T-cell (primary cell): ENCODE measurements at regions of chr14 and their contacts with region 1.

Region 1: DNA sequence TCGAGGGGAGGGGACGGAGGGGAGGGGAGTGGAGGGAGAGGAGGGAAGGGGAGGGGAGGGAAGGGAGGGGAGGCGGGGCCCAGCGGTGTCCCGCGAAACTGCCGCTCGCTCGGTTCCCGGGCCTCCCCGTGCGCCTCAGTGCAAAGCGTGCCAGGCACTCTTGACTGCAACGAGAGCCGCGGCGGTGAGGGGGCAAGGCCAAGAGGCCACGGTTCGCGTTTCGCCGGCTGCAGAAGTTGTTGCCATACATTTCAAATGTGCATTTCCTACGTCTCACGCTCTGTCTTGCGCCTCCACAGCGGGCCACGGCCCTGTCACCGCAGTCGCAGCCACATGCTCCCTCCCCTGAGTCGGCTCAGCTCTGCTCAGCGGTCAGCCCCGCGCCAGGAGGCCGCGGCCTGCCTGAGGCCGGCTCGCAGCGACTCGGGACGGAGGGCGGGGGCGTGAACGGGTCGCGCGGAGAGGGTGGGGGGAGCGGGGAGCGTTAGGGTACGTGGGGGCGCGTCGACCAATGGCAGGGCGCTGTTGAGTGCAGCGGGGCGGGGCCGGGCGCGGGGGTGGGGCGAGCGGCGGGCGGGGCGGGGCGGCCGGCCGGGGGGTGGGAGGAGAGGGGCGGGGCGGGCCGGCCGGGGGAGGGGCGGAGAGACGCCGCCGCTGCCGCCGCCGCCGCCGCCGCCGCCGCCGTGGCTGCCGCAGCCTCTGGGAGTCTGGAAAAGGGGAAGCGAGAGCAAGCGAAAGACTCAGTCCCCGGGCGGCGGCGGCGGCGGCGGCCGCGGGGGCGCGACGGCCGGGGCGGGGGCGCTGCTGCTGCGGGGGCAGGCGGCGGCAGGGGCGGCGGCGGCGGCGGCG is at the start of gene PPP2R5C:
- DNase-seq: peak; percentile 77 to 92 (median 84)
- ATAC-seq: peak; percentile 71 to 75 (median 74)
- H3K4me3 ChIP-seq: peak within 1 kb of the TSS; percentile 78 to 96
- H3K4me3 Mint-ChIP-seq: peak within 1 kb of the TSS; percentile 88 to 91 (median 89)
- H3K27ac ChIP-seq: peak within 1 kb of the TSS; percentile 91
- H3K27ac Mint-ChIP-seq: peak within 1 kb of the TSS; percentile 80 to 83
- H3K4me1 ChIP-seq: peaks cover 2 to 26% of the 10 kb centered on the region in 2 experiments
- H3K4me1 Mint-ChIP-seq: peaks cover 32 to 47% (median 40%) of the 10 kb centered on the region in 3 donors
- H3K27me3 ChIP-seq: no peaks in the 10 kb centered on the region
- H3K27me3 Mint-ChIP-seq: no peaks in the 10 kb centered on the region
- total RNA-seq, gene PPP2R5C: 435 to 627 (median 489) TPM

Region 2: GRCh38 chr14:101707068-101707842 is 54.0 kb before region 1 on chr14:
- CTCF ChIA-PET with region 1: interaction called in 1 of 2 experiments, 37 read pairs
- POLR2A ChIA-PET with region 1: interaction called in 1 of 2 experiments, 19 read pairs
- DNase-seq: peak; percentile 43 to 94 (median 61)
- ATAC-seq: peak; percentile 50 to 69 (median 62)
- H3K4me3 ChIP-seq: peak overlapping the region in 1 of 2 donors; percentile 19
- H3K4me3 Mint-ChIP-seq: peak overlapping the region; percentile 37 to 68 (median 50)
- H3K27ac ChIP-seq: peak overlapping the region; percentile 85
- H3K27ac Mint-ChIP-seq: peak overlapping the region; percentile 89 to 92
- H3K4me1 ChIP-seq: peaks cover 16 to 59% of the 10 kb centered on the region in 2 experiments
- H3K4me1 Mint-ChIP-seq: peaks cover 41 to 56% (median 42%) of the 10 kb centered on the region in 3 donors
- H3K27me3 ChIP-seq: no peaks in the 10 kb centered on the region
- H3K27me3 Mint-ChIP-seq: no peaks in the 10 kb centered on the region

Region 3: DNA sequence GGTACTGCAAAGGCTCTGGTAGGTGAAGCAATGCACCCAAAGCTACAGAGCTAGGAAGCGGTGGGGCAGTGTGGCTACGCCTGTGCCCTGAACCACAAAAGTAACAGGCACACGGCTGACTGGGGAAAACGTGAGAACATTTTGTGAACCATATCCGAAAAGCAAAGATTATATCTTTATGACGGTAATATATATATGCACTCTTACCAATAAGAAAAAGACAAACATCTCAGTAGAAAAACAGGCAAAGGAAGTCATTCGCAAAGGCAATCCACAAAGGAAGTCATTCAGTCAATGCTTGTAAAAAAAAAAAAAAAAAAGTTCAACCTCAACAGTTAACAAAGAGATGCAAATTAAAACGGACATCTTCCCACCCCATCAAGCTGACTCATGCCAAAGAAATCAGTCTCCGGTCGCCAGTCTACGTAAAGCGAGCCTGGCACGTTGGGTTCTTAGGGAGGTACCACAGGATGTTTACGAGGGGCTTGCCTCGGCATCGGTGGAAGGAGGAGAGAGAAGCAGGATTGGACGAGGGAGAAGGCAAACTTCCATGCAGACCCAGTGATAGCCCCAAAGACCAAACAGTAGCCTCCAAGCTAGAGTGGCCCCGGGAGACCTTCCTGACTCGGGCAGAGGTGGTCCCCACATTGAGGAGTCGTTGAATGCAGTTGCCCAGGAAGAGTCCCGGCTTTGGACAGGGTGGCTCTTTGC is 39.1 kb before region 1 on chr14:
- CTCF ChIA-PET with region 1: interaction called in 1 of 2 experiments, 15 read pairs
- POLR2A ChIA-PET with region 1: interaction called, 4 to 16 read pairs
- DNase-seq: peak; percentile 52 to 94 (median 84)
- ATAC-seq: peak; percentile 83 to 87 (median 84)
- H3K4me3 ChIP-seq: peak overlapping the region; percentile 30 to 42
- H3K4me3 Mint-ChIP-seq: peak overlapping the region; percentile 75 to 78 (median 78)
- H3K27ac ChIP-seq: peak overlapping the region; percentile 99
- H3K27ac Mint-ChIP-seq: peak overlapping the region; percentile 99 to 100
- H3K4me1 ChIP-seq: peaks cover 18 to 67% of the 10 kb centered on the region in 2 experiments
- H3K4me1 Mint-ChIP-seq: peaks cover 56 to 73% (median 59%) of the 10 kb centered on the region in 3 donors
- H3K27me3 ChIP-seq: no peaks in the 10 kb centered on the region
- H3K27me3 Mint-ChIP-seq: no peaks in the 10 kb centered on the region

Region 4: DNA sequence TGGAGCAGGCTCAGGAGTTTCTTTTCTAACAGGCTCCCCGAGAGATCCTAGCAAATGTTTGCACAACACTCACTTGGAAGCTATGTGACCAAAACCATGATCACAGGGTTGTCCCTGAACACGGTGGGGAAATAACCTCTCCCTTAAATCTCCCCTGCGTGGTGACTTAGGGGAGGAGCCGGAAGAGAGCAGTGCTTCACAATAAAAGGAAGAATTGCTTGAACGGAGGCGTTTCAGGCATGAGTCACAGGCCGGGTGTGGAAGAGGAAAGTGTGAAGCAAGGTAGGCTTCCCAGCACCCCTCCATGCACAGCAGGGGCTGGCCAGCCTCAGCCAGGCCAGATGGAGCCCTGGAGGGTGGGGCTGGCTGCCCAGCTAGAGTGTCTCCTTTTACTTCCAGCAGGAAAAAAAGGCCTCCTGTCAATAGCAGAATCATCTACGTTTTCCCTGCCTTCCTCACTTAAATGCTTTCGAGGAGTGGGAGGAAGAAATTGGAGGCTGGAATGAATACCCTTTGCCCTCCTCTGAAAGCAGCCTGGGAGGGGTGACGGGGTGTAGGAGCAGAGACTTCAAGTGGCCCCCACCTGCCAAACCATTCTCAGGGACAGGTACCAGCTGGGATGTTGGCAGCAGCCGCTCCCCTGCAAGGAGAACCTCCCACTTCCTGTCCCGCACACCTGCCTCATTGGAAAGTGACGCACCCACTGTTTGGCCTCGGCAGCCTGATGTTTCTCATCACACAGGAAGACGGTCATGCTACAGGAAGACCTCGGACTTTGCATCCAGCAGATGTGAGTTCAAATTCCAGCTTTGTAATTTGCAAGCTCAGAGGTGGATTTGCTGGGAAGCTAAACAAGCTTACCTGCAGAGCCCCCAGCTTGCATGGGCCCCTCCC is 29.8 kb before region 1 on chr14:
- CTCF ChIA-PET with region 1: interaction called in 1 of 2 experiments, 19 read pairs
- POLR2A ChIA-PET with region 1: interaction called in 1 of 2 experiments, 11 read pairs
- DNase-seq: peak; percentile 46 to 92 (median 78)
- ATAC-seq: peak; percentile 92 to 95 (median 94)
- H3K4me3 ChIP-seq: peak overlapping the region in 1 of 2 donors; percentile 35
- H3K4me3 Mint-ChIP-seq: peak overlapping the region; percentile 66 to 76 (median 71)
- H3K27ac ChIP-seq: peak overlapping the region; percentile 94
- H3K27ac Mint-ChIP-seq: peak overlapping the region; percentile 91 to 96
- H3K4me1 ChIP-seq: peaks cover 18 to 38% of the 10 kb centered on the region in 2 experiments
- H3K4me1 Mint-ChIP-seq: peaks cover 50 to 68% (median 63%) of the 10 kb centered on the region in 3 donors
- H3K27me3 ChIP-seq: no peaks in the 10 kb centered on the region
- H3K27me3 Mint-ChIP-seq: no peaks in the 10 kb centered on the region

Region 5: DNA sequence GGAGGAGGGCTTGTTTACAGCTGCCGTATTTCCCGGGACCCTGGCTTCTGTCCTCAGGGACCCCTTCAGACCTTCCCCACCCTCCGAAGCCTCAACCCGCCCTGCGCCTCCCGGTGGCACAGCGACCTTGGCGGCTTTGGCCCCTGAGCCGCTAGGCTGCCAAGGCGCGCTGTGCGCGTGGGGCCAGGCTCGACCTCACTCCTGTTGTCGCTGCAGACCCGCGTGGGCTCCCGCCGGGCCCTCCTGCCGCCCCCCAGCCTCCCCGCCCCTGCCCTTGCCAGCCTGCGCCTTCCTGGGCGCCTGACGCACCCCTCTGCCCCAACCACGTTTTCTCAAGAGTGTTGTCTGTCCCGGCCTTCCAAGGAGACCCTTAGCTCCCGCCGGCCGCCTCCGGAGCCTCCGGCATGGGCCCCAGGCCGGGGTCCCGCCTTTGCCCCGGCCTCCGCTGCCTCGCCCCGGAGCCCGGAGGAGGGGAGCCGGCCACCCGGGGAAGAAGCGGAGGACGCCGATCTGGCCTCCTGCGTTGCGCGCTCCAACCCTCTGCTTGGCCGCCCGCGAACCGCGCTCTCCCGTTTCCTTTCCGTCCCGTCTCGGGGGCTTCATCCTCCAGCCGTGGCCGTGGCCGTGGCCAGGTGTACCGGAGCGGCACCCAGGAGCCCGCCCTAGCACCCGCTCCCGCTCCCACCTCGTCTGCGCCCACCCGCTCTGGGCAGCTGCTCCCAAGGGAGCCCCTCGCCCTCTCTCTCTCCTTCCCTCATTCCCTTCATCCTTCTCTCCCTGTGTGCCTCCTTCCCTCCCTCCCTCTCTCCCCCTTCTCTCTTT is 20.2 kb after region 1 on chr14:
- CTCF ChIA-PET with region 1: interaction called in 1 of 2 experiments, 3 read pairs
- POLR2A ChIA-PET with region 1: interaction called in 1 of 2 experiments, 13 read pairs
- DNase-seq: peak in 20 of 35 experiments; percentile 9 to 48 (median 20)
- ATAC-seq: peak; percentile 69 to 74 (median 72)
- H3K4me3 ChIP-seq: peak overlapping the region; percentile 61 to 64
- H3K4me3 Mint-ChIP-seq: peak overlapping the region; percentile 65 to 76 (median 70)
- H3K27ac ChIP-seq: no peak overlapping the region
- H3K27ac Mint-ChIP-seq: no peak overlapping the region
- H3K4me1 ChIP-seq: peaks cover 0 to 16% of the 10 kb centered on the region in 2 experiments
- H3K4me1 Mint-ChIP-seq: peaks cover 33 to 44% (median 39%) of the 10 kb centered on the region in 3 donors
- H3K27me3 ChIP-seq: peaks cover 3 to 5% of the 10 kb centered on the region in 2 experiments
- H3K27me3 Mint-ChIP-seq: peaks cover 0 to 6% of the 10 kb centered on the region in 2 donors

Region 6: GRCh38 chr14:101823511-101824120 is 62.4 kb after region 1 on chr14:
- CTCF ChIA-PET with region 1: interaction called in 1 of 2 experiments, 3 read pairs
- POLR2A ChIA-PET with region 1: interaction called in 1 of 2 experiments, 12 read pairs
- DNase-seq: peak in 34 of 35 experiments; percentile 28 to 86 (median 64)
- ATAC-seq: peak; percentile 66 to 68 (median 67)
- H3K4me3 ChIP-seq: peak overlapping the region; percentile 60 to 70
- H3K4me3 Mint-ChIP-seq: peak overlapping the region; percentile 81 to 91 (median 88)
- H3K27ac ChIP-seq: peak overlapping the region; percentile 99
- H3K27ac Mint-ChIP-seq: peak overlapping the region; percentile 97
- H3K4me1 ChIP-seq: peaks cover 62 to 67% of the 10 kb centered on the region in 2 experiments
- H3K4me1 Mint-ChIP-seq: peaks cover 68 to 88% (median 77%) of the 10 kb centered on the region in 3 donors
- H3K27me3 ChIP-seq: no peaks in the 10 kb centered on the region
- H3K27me3 Mint-ChIP-seq: no peaks in the 10 kb centered on the region